CD4-positive, alpha-beta memory T cell (primary cell): ENCODE measurements at regions of chr2 and their contacts with region 1.

Region 1: DNA sequence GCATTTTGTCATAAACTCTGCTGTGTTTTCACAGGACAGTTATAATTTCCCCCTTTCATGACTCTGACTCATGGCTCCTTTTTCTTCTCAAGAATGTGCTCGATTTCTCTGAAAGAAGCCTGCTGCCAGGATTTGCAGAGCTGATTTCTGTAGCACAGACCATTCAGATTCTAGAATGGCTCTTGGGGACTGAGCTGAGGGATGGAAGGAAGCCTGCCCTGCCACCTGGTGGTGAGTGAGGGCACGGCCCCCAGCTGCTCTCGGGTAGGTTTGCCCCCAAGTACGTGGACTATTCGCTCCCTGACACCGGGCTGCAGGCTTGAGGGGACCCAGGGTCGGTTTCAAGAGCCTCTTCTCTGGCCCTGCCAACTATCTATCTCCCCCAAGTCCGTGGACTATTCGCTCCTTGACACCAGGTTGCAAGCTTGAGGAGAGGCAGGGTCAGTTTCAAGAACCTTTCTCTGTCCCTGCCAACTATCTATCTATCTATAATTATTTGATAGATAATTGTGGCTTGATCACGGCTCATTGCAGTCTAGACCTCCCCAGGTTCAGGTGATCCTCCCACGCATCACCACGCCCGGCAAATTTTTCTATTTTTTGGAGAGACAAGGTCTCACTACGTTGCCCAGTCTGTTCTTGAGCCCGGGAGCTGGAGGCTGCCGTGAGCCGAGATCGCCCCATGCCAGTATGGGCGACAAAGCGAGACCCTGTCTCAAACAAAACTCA is 1.4 kb upstream of the SMYD5 start:
- DNase-seq: peak; percentile 58 to 70 (median 65)
- H3K4me3 ChIP-seq: no peak overlapping the region
- H3K4me3 Mint-ChIP-seq: peak overlapping the region; percentile 45 to 83 (median 58)
- H3K27ac ChIP-seq: no peak overlapping the region
- H3K27ac Mint-ChIP-seq: peak overlapping the region in 5 of 7 donors; percentile 23 to 97 (median 76)
- H3K4me1 ChIP-seq: peaks cover 33% of the 10 kb centered on the region
- H3K4me1 Mint-ChIP-seq: peaks cover 25 to 38% (median 31%) of the 10 kb centered on the region in 4 donors
- H3K27me3 ChIP-seq: no peaks in the 10 kb centered on the region
- H3K27me3 Mint-ChIP-seq: peaks cover 8 to 9% of the 10 kb centered on the region in 2 donors

Region 2: GRCh38 chr2:73071360-73072133 is 141.1 kb before region 1 on chr2 and contains the start of gene SFXN5:
- CTCF ChIA-PET with region 1: interaction called, 7 read pairs
- POLR2A ChIA-PET with region 1: interaction called, 3 read pairs
- intact Hi-C with region 1: loop called (anchors 1 kb)
- DNase-seq: peak; percentile 90 to 95 (median 90)
- H3K4me3 ChIP-seq: peak within 1 kb of the TSS; percentile 88 to 90
- H3K4me3 Mint-ChIP-seq: peak within 1 kb of the TSS; percentile 91 to 96 (median 94)
- H3K27ac ChIP-seq: peak within 1 kb of the TSS; percentile 65
- H3K27ac Mint-ChIP-seq: peak within 1 kb of the TSS; percentile 91 to 97 (median 93)
- H3K4me1 ChIP-seq: peaks cover 14% of the 10 kb centered on the region
- H3K4me1 Mint-ChIP-seq: peaks cover 17 to 47% (median 20%) of the 10 kb centered on the region in 4 donors
- H3K27me3 ChIP-seq: no peaks in the 10 kb centered on the region
- H3K27me3 Mint-ChIP-seq: peaks cover 0 to 1% of the 10 kb centered on the region in 2 donors
- total RNA-seq, gene SFXN5: 6.5 to 10.0 TPM

Region 3: GRCh38 chr2:73202156-73203054 is 10.2 kb before region 1 on chr2 and contains the start of gene NOTO:
- CTCF ChIA-PET with region 1: interaction called, 10 read pairs
- POLR2A ChIA-PET with region 1: no interaction called
- intact Hi-C with region 1: no loop called
- DNase-seq: peak in 1 of 5 donors; percentile 13
- H3K4me3 ChIP-seq: no peak within 1 kb of the TSS
- H3K4me3 Mint-ChIP-seq: peak within 1 kb of the TSS in 7 of 8 donors; percentile 54 to 75 (median 70)
- H3K27ac ChIP-seq: no peak within 1 kb of the TSS
- H3K27ac Mint-ChIP-seq: peak within 1 kb of the TSS in 1 of 7 donors; percentile 13
- H3K4me1 ChIP-seq: peaks cover 10% of the 10 kb centered on the region
- H3K4me1 Mint-ChIP-seq: peaks cover 5 to 11% (median 8%) of the 10 kb centered on the region in 4 donors
- H3K27me3 ChIP-seq: peaks cover 29% of the 10 kb centered on the region
- H3K27me3 Mint-ChIP-seq: peaks cover 38 to 44% of the 10 kb centered on the region in 2 donors
- total RNA-seq, gene NOTO: not detected

Region 4: DNA sequence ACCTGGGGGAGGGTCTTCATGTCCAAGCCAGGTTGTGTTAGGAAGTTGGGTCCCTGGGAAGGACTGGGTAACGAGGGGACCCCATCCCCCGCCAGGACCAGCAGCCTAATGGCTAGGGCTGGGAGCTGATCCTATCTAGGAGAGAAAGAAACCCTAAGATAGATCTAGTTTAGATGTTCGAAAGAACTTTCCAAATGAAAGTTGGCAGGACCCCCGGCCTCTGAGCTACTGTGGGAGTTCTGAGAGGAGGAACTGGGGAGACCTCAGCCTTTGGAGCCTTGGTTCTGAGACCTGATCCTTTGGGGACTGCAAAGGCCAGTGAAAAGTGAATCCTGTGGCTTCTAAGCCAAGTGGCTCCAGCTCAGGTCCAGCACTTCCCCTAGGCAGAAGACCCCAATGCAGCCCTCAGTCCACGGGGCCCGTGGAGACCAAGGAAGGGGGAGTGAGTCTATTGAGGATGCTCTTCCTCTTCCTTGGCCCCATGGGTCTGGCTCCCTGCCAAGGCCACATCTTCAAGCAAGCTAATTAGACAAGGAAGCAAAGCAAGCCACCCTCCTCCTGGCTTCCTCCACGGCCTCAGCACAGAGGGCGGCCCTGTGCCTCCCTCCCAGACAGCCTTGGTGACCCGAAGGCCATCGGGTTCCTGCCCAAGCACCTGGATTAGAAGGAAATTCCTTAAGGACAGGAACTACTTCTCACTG is 45.0 kb after region 1 on chr2:
- CTCF ChIA-PET with region 1: no interaction called
- POLR2A ChIA-PET with region 1: no interaction called
- intact Hi-C with region 1: no loop called
- DNase-seq: peak in 3 of 5 donors; percentile 21 to 36 (median 24)
- H3K4me3 ChIP-seq: no peak overlapping the region
- H3K4me3 Mint-ChIP-seq: no peak overlapping the region
- H3K27ac ChIP-seq: no peak overlapping the region
- H3K27ac Mint-ChIP-seq: peak overlapping the region in 4 of 7 donors; percentile 22 to 75 (median 62)
- H3K4me1 ChIP-seq: peaks cover 8% of the 10 kb centered on the region
- H3K4me1 Mint-ChIP-seq: peaks cover 1 to 21% (median 5%) of the 10 kb centered on the region in 4 donors
- H3K27me3 ChIP-seq: no peaks in the 10 kb centered on the region
- H3K27me3 Mint-ChIP-seq: no peaks in the 10 kb centered on the region

Region 5: GRCh38 chr2:73268830-73269685 is 56.4 kb after region 1 on chr2:
- CTCF ChIA-PET with region 1: interaction called, 10 read pairs
- POLR2A ChIA-PET with region 1: interaction called, 3 read pairs
- intact Hi-C with region 1: no loop called
- DNase-seq: peak; percentile 77 to 82 (median 80)
- H3K4me3 ChIP-seq: peak overlapping the region in 1 of 2 donors; percentile 45
- H3K4me3 Mint-ChIP-seq: peak overlapping the region in 7 of 8 donors; percentile 25 to 70 (median 67)
- H3K27ac ChIP-seq: peak overlapping the region; percentile 46
- H3K27ac Mint-ChIP-seq: no peak overlapping the region
- H3K4me1 ChIP-seq: peaks cover 24% of the 10 kb centered on the region
- H3K4me1 Mint-ChIP-seq: peaks cover 18 to 27% (median 23%) of the 10 kb centered on the region in 4 donors
- H3K27me3 ChIP-seq: no peaks in the 10 kb centered on the region
- H3K27me3 Mint-ChIP-seq: no peaks in the 10 kb centered on the region

Region 6: DNA sequence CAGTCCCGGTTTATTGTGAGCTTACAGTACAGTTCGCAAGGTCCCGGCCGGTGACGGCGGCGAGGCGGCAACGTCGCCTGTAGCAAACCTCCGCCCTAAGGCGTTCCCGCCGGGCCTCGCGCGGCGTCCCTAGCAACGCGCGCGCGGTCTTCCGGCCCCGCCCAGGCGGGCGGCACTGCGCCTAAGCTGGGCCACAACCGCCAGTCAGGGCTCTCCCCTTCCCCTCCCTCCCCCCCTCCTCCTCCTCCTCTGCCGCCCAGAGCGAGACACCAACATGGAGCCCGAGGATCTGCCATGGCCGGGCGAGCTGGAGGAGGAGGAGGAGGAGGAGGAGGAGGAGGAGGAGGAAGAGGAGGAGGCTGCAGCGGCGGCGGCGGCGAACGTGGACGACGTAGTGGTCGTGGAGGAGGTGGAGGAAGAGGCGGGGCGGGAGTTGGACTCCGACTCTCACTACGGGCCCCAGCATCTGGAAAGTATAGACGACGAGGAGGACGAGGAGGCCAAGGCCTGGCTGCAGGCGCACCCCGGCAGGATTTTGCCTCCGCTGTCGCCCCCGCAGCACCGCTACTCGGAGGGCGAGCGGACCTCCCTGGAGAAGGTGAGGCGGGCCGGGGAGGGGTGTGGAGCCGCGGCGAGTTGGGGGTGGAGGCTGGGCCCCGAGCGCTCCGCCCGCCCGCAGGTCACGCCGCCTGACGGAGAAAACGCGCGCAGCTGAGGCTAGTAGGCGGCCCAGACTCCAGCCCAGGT is 173.2 kb after region 1 on chr2 and contains the start of gene ALMS1:
- CTCF ChIA-PET with region 1: interaction called, 3 read pairs
- POLR2A ChIA-PET with region 1: interaction called, 4 read pairs
- intact Hi-C with region 1: loop called (anchors 1 kb)
- DNase-seq: peak; percentile 86 to 91 (median 91)
- H3K4me3 ChIP-seq: peak within 1 kb of the TSS; percentile 62 to 79
- H3K4me3 Mint-ChIP-seq: peak within 1 kb of the TSS; percentile 91 to 93 (median 92)
- H3K27ac ChIP-seq: peak within 1 kb of the TSS; percentile 77
- H3K27ac Mint-ChIP-seq: peak within 1 kb of the TSS; percentile 96 to 99 (median 98)
- H3K4me1 ChIP-seq: peaks cover 25% of the 10 kb centered on the region
- H3K4me1 Mint-ChIP-seq: peaks cover 28 to 43% (median 34%) of the 10 kb centered on the region in 4 donors
- H3K27me3 ChIP-seq: no peaks in the 10 kb centered on the region
- H3K27me3 Mint-ChIP-seq: peaks cover 0 to 3% of the 10 kb centered on the region in 2 donors
- total RNA-seq, gene ALMS1: 35.5 to 42.9 TPM